Activated T-helper 2 cell treated with anti-CD3 and anti-CD28 coated beads, Interferon-gamma antibody, Interleukin-2, Interleukin-4, amounts not matched to agents 10 μg/mL and 5 μg/mL and 100 μg/mL, durations not matched to agents 14 hours and 24 hours and 36 hours (primary cell): ENCODE measurements at regions of chr1 and their contacts with region 1.

Region 1: GRCh38 chr1:182249201-182249676 is 142.4 kb downstream of the GLUL start:
- DNase-seq: peak; percentile 18
- H3K4me3 Mint-ChIP-seq: no peak overlapping the region
- H3K27ac Mint-ChIP-seq: peak overlapping the region; percentile 80
- H3K4me1 Mint-ChIP-seq: peaks cover 16% of the 10 kb centered on the region
- H3K27me3 Mint-ChIP-seq: peaks cover 6% of the 10 kb centered on the region

Region 2: DNA sequence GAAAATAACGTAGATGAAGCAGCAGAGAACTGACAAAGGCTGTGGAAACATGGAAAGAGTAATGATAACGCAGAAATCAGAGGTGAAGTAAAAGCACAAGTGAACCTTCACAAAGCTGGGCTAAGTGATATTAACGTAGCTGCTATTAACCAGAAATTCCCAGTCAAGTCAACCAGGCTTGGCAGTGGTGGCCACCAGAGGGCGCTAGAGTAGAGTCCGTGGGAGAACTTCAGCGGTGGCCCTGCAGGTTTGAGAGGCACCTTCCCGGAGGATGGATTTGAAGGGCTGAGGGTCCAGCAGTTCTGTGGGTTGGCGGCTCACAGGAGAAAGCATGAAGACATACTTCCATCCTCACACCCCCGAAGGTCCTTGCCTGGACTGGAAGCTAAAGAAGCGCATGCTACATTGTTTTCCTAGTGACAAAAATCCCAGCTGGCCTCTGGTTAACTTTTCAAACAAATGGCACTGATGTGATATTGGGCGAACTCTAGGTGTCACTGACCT is 106.0 kb before region 1 on chr1:
- intact Hi-C with region 1: loop called (anchors 10 kb)
- DNase-seq: peak; percentile 71
- H3K4me3 Mint-ChIP-seq: no peak overlapping the region
- H3K27ac Mint-ChIP-seq: no peak overlapping the region
- H3K4me1 Mint-ChIP-seq: peaks cover 12% of the 10 kb centered on the region
- H3K27me3 Mint-ChIP-seq: peaks cover 6% of the 10 kb centered on the region

Region 3: GRCh38 chr1:182193908-182194550 is 55.2 kb before region 1 on chr1:
- intact Hi-C with region 1: loop called (anchors 2 kb)
- DNase-seq: no peak
- H3K4me3 Mint-ChIP-seq: no peak overlapping the region
- H3K27ac Mint-ChIP-seq: no peak overlapping the region
- H3K4me1 Mint-ChIP-seq: peaks cover 3% of the 10 kb centered on the region
- H3K27me3 Mint-ChIP-seq: peaks cover 22% of the 10 kb centered on the region

Region 4: DNA sequence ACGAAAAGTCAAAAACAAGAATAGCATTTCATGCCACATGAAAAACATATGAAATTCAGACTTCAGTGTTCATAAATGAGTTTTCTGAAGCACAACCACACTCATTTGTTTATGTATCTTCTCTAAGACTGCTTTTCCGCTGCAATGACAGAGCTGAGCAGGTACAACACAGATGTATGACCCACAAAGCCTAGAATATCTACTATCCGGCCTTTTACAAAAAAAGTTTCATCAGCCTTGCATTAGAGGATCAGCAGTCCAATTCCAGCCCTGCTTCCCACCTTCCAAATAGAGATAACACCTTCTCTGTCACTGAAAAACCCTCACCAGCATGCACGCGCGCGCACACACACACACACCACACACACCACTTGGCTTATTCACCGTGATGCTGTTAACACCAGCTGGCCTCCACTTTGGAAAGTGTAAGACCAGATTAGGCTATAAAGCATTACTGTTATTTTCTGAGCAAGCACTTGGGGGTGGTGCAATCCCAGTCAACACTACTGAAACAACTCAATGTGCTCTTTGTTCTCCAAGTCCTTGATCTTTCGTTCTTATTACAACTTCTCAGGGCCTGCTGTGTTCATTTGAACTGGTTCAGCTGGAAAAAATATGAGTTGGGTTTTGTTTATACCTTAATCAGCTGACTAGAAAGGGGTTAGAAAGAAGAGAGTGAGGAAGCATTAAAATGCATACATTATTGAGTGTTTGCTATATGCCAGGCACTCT is 52.4 kb after region 1 on chr1:
- intact Hi-C with region 1: loop called (anchors 5 kb)
- DNase-seq: no peak
- H3K4me3 Mint-ChIP-seq: no peak overlapping the region
- H3K27ac Mint-ChIP-seq: peak overlapping the region; percentile 33
- H3K4me1 Mint-ChIP-seq: peaks cover 26% of the 10 kb centered on the region
- H3K27me3 Mint-ChIP-seq: no peaks in the 10 kb centered on the region